Heart left ventricle (tissue), 16 donors: ENCODE measurements at regions of chr13 and their contacts with region 1.

Region 1: GRCh38 chr13:26425443-26426358 is 131.8 kb upstream of the WASF3 start:
- DNase-seq: no peak
- ATAC-seq: peak; percentile 35 to 82 (median 68)
- H3K4me3 ChIP-seq: no peak overlapping the region
- H3K27ac ChIP-seq: peak overlapping the region in 9 of 12 donors; percentile 4 to 86 (median 66)
- H3K4me1 ChIP-seq: peaks cover 0 to 32% (median 2%) of the 10 kb centered on the region in 12 donors
- H3K27me3 ChIP-seq: no peaks in the 10 kb centered on the region
- CTCF ChIP-seq: no peak
- POLR2A ChIP-seq: no peak

Region 2: DNA sequence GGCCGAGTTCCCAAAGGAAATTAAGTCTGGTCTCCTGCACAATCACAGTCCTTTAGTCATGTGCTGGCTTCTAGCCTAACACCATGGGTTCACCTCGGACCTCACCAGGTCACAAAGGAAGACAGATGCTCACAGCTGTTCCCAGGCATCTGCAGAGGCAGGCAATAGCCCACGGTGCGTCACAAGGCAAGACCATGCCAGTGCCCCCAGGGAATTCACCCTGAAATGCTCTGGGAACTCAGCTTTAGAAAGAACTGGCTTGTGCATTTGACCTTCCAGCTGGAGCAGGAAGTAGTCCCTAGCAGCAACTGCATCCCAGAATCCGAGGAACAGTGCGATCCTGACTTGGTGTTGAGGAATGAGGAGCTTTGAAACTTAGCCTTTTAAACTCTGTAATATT is 34.9 kb after region 1 on chr13:
- intact Hi-C with region 1: loop called in 1 of 10 experiments (anchors 5 kb)
- DNase-seq: peak; percentile 86 to 94 (median 90)
- ATAC-seq: peak; percentile 82 to 86 (median 83)
- H3K4me3 ChIP-seq: no peak overlapping the region
- H3K27ac ChIP-seq: peak overlapping the region; percentile 35 to 84 (median 68)
- H3K4me1 ChIP-seq: peaks cover 0 to 42% (median 0%) of the 10 kb centered on the region in 12 donors
- H3K27me3 ChIP-seq: peaks cover 0 to 4% (median 0%) of the 10 kb centered on the region in 9 donors
- CTCF ChIP-seq: no peak
- POLR2A ChIP-seq: no peak

Region 3: DNA sequence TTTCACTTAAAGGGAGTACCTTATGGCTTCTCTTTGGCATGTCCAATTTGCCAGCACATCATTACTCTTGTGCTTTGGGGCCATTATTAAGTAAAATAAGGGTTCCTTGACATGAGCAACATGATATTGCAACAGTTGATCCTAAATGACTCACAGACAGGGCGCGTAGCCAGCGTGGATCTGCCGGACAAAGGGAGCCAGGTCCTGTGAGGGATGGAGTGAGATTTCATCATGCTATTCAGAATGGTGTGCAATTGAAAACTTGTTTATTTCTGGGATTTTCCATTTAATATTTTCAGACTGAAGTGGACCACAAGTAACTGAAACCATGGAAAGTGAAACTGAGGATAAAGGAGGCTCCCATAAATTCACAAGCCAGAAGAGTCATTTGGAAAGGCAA is 83.2 kb after region 1 on chr13:
- intact Hi-C with region 1: no loop called
- DNase-seq: peak; percentile 25 to 83 (median 75)
- ATAC-seq: peak in 2 of 4 donors; percentile 81 to 89
- H3K4me3 ChIP-seq: no peak overlapping the region
- H3K27ac ChIP-seq: peak overlapping the region in 2 of 12 donors; percentile 8 to 47
- H3K4me1 ChIP-seq: no peaks in the 10 kb centered on the region
- H3K27me3 ChIP-seq: no peaks in the 10 kb centered on the region
- CTCF ChIP-seq: no peak
- POLR2A ChIP-seq: no peak

Region 4: GRCh38 chr13:27035982-27036981 is 610.6 kb after region 1 on chr13:
- intact Hi-C with region 1: no loop called
- DNase-seq: no peak
- ATAC-seq: peak in 1 of 4 donors; percentile 40
- H3K4me3 ChIP-seq: no peak overlapping the region
- H3K27ac ChIP-seq: peak overlapping the region in 1 of 12 donors; percentile 63
- H3K4me1 ChIP-seq: peaks cover 0 to 28% (median 7%) of the 10 kb centered on the region in 12 donors
- H3K27me3 ChIP-seq: no peaks in the 10 kb centered on the region
- CTCF ChIP-seq: no peak
- POLR2A ChIP-seq: no peak